Tibial artery (tissue), 4 donors: ENCODE measurements at regions of chr12 and their contacts with region 1.

Region 1: GRCh38 chr12:132285991-132286681 is 43.3 kb downstream of the GALNT9 start:
- DNase-seq: peak in 1 of 2 donors; percentile 29
- H3K4me3 ChIP-seq: peak overlapping the region; percentile 15 to 43
- H3K27ac ChIP-seq: no peak overlapping the region
- H3K4me1 ChIP-seq: peaks cover 0 to 13% (median 10%) of the 10 kb centered on the region in 4 donors
- H3K27me3 ChIP-seq: peaks cover 0 to 78% of the 10 kb centered on the region in 2 donors
- CTCF ChIP-seq: no peak

Region 2: GRCh38 chr12:132202929-132203721 is 83.0 kb before region 1 on chr12:
- intact Hi-C with region 1: loop called (anchors 1 kb)
- DNase-seq: no peak
- H3K4me3 ChIP-seq: no peak overlapping the region
- H3K27ac ChIP-seq: no peak overlapping the region
- H3K4me1 ChIP-seq: peaks cover 0 to 24% (median 13%) of the 10 kb centered on the region in 4 donors
- H3K27me3 ChIP-seq: peaks cover 0 to 97% of the 10 kb centered on the region in 2 donors
- CTCF ChIP-seq: no peak